Calu3 (cell line): ENCODE measurements at regions of chr2 and their contacts with region 1.

Region 1: GRCh38 chr2:188725746-188726360 is 248.3 kb upstream of the COL3A1 start:
- DNase-seq: no peak
- H3K4me3 Mint-ChIP-seq: no peak overlapping the region
- H3K27ac Mint-ChIP-seq: no peak overlapping the region
- H3K4me1 Mint-ChIP-seq: no peaks in the 10 kb centered on the region
- H3K27me3 Mint-ChIP-seq: no peaks in the 10 kb centered on the region
- CTCF ChIP-seq: no peak

Region 2: DNA sequence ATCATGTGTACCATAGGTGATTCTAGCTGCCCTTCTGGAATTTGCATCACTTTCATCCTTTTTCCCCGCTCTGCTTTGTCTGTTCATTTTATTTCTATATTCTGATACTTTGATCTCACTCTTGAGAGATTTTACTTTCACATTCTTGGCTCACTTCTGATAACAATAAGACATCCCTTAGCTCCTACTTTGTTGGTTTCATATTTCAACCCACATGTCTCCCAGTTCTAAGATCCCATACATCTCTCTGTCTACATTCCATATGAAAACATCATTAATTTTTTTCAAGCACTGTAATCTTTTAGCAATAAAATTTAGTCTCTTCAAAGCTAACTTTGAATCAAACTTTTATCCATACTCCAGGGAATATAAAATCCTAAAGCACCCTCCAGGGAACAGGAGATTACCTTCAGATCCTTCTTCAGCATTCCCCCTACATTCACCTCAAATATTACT is 323.9 kb after region 1 on chr2:
- CTCF ChIA-PET with region 1: interaction called, 10 read pairs
- intact Hi-C with region 1: no loop called
- DNase-seq: no peak
- H3K4me3 Mint-ChIP-seq: no peak overlapping the region
- H3K27ac Mint-ChIP-seq: no peak overlapping the region
- H3K4me1 Mint-ChIP-seq: no peaks in the 10 kb centered on the region
- H3K27me3 Mint-ChIP-seq: no peaks in the 10 kb centered on the region
- CTCF ChIP-seq: no peak